WTC11 (cell line): ENCODE measurements at regions of chr4 and their contacts with region 1.

Region 1: DNA sequence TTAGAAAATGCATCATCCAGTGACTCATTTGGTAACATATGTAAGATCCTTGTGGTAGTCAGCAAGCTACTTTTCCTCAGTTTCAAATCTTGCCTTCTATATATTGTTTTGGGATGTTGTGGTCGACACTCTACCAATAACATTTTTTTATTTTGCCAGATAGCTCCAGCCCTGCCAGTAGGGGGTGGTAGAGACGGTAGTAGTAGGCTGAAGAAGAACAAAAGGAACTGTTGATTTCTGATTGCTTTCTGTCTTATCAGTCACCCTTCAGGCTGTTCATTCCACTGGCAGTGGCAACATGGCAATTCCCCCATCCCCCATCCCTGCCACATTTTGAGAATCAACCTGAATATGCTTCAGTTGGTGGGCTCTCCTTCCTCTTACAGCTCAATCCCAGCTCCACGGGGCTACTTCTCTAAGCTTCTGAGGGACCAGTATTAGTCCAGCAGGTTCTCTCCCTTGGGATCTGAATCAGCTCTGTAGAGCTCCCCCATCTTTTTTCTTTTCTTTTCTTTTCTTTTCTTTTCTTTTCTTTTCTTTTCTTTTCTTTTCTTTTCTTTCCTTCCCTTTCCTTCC is 171.5 kb upstream of the VEGFC start:
- DNase-seq: peak; percentile 42
- ATAC-seq: peak; percentile 75
- H3K4me3 Mint-ChIP-seq: no peak overlapping the region
- H3K27ac Mint-ChIP-seq: no peak overlapping the region
- H3K4me1 Mint-ChIP-seq: 0 out of 2 replicates have a peak, but pooled peaks cover 4% of the 10 kb centered on the region
- H3K27me3 Mint-ChIP-seq: no peaks in the 10 kb centered on the region
- CTCF ChIP-seq: no peak; the same call in 1 of the 2 replicates

Region 2: GRCh38 chr4:177012918-177013545 is 48.8 kb after region 1 on chr4:
- CTCF ChIA-PET with region 1: interaction called, 10 read pairs
- POLR2A ChIA-PET with region 1: no interaction called
- DNase-seq: no peak
- ATAC-seq: no peak
- H3K4me3 Mint-ChIP-seq: no peak overlapping the region
- H3K27ac Mint-ChIP-seq: no peak overlapping the region
- H3K4me1 Mint-ChIP-seq: no peaks in the 10 kb centered on the region
- H3K27me3 Mint-ChIP-seq: no peaks in the 10 kb centered on the region
- CTCF ChIP-seq: no peak